Head of caudate nucleus (tissue), 42 donors: ENCODE measurements at regions of chr13 and their contacts with region 1.

Region 1: GRCh38 chr13:112744476-112745021 is 54.7 kb downstream of the ATP11A start:
- DNase-seq: peak in 4 of 42 donors; percentile 7 to 67 (median 44)

Region 2: DNA sequence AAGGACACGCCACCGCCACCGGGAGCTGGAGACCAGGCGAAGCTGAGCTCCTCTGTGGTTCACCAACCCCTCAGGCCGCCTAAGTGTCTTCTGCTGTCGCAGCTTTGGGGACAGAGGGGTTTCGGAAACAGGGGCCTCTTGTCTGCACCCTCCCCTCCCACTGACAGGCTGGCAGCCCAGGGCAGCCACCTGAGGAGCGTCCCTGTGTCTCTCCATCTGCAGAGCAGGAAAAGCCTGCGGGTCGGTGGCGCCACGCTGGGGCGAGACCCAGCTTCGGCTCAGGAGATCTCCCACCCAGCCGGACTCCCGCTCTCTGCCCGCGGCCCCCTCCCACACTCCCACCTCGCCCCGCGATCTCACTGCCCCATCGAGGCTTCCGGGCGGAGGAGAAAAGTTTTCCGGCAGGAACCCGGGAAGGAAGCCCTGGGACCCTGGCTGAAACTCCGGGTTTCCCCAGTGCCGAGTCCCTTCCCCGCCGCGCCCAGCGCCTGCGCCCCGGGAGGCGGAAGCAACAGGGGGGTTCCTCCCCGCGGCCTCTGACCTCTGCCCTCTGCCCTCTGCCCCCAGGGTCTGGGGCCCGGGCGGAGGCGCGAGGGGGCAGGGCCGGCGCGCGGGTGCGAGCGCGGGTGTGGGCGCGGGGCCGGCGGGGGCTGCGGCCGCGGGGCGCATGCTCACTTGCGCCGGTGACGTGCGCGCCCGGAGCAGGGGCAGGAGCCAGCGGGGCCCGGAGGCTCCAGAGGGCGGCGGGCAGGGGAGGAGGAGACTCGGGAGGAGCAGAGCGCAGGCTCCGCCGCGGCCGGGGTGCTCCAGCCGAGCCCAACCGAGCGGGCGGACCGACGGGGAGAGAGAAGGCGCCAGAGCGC is 55.0 kb before region 1 on chr13 and contains the start of gene ATP11A:
- intact Hi-C with region 1: loop called (anchors 5 kb)
- DNase-seq: peak; percentile 71 to 97 (median 94)